SK-N-SH (cell line): ENCODE measurements at regions of chr17 and their contacts with region 1.

Region 1: GRCh38 chr17:38674749-38675615 is at the start of gene EPOP:
- DNase-seq: peak; percentile 99
- H3K4me3 ChIP-seq: peak within 1 kb of the TSS; percentile 71 to 77
- H3K27ac ChIP-seq: peak within 1 kb of the TSS in 1 of 2 experiments; percentile 64; a peak in 2 of 4 replicates
- H3K4me1 ChIP-seq: peaks cover 0 to 19% of the 10 kb centered on the region in 2 experiments; a peak in 1 of 4 replicates
- H3K27me3 ChIP-seq: no peaks in the 10 kb centered on the region
- CTCF ChIP-seq: no peak
- EP300 ChIP-seq: no peak
- RAD21 ChIP-seq: no peak
- polyA plus RNA-seq, gene EPOP: 2.7 and 3.1 TPM in 2 replicates

Region 2: DNA sequence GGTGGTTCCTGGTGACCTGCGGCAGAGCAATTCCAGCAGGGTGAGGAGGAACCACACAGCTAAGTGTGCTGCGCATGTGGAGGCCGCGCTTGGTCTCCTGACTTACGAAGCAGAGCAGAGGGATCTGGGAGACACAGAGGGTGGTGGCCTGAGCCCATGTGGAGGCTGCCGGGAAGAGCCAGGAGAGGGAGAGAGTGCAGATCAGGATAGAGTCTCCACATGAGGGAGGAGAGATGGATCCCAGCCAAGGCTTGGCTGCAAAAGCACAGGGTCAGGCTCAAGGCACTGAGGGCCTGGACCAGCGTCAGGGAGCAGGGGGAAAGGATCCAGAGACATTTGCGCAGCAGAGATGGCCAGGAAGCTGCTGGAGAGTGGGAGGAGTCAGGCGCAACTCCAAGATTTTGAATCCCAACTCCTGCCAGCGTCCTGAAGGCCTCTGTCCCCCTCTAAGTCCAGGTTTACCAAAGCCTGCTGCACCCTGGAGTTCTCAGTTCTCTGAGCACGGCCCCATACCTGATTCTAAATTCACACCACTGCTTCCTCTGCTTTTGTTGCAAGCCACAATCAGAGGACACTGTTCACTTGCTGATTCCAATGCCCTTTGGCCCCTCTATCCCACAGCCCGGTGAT is 18.8 kb after region 1 on chr17:
- CTCF ChIA-PET with region 1: interaction called, 18 read pairs
- POLR2A ChIA-PET with region 1: interaction called, 3 read pairs
- DNase-seq: peak; percentile 78
- H3K4me3 ChIP-seq: no peak overlapping the region
- H3K27ac ChIP-seq: peak overlapping the region; percentile 35 to 91; a peak in 3 of 4 replicates
- H3K4me1 ChIP-seq: peaks cover 9 to 15% of the 10 kb centered on the region in 2 experiments; a peak in 2 of 4 replicates
- H3K27me3 ChIP-seq: no peaks in the 10 kb centered on the region
- CTCF ChIP-seq: no peak
- EP300 ChIP-seq: no peak
- RAD21 ChIP-seq: no peak

Region 3: DNA sequence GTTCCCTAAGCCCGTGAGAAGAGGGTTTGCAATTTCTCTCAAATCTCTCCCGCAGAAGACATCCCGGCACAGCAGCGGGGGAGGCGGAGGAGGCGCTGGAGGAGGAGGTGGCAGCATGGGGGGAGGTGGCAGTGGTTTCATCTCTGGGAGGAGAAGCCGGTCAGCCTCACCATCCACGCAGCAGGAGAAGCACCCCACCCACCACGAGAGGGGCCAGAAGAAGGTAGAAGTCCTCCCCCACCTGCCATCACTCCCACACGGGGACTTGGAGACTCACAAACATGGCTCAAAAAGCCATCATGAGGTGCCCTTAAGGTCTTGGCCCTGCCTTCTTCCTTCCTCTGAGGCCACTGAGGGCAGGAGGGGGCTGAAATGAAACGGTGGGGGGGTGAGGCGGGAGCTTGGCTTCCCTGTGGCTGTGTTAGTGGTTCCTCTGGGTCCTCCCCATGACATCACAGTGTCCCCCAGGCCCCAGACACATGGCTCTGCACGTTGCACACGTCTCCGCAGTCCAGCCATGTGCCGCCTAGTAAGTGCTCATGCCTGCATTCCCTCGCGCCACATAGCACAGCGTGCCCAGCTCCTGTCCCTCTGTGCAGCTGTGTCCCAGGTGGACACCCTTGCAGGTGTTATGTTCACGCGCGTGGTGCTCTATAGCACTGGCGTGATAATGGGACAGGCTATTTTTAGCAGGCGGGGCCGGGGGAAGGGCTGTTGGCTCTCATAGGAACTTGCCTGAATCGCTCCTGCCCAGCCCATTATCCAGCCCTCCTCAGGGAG is 37.0 kb after region 1 on chr17:
- CTCF ChIA-PET with region 1: interaction called, 10 read pairs
- POLR2A ChIA-PET with region 1: no interaction called
- DNase-seq: no peak
- H3K4me3 ChIP-seq: no peak overlapping the region
- H3K27ac ChIP-seq: no peak overlapping the region
- H3K4me1 ChIP-seq: peaks cover 2 to 13% of the 10 kb centered on the region in 2 experiments; a peak in 2 of 4 replicates
- H3K27me3 ChIP-seq: no peaks in the 10 kb centered on the region
- CTCF ChIP-seq: no peak
- EP300 ChIP-seq: no peak
- RAD21 ChIP-seq: no peak

Region 4: GRCh38 chr17:38729886-38730525 is 55.0 kb after region 1 on chr17 and contains the start of gene CISD3:
- CTCF ChIA-PET with region 1: interaction called, 93 read pairs
- POLR2A ChIA-PET with region 1: interaction called, 7 read pairs
- DNase-seq: peak; percentile 95
- H3K4me3 ChIP-seq: peak within 1 kb of the TSS; percentile 78 to 79
- H3K27ac ChIP-seq: peak within 1 kb of the TSS; percentile 73 to 98
- H3K4me1 ChIP-seq: peaks cover 6 to 68% of the 10 kb centered on the region in 2 experiments; a peak in 1 of 4 replicates
- H3K27me3 ChIP-seq: no peaks in the 10 kb centered on the region
- CTCF ChIP-seq: peak; percentile 54
- EP300 ChIP-seq: no peak; a peak in 1 of 4 replicates
- RAD21 ChIP-seq: peak; percentile 40; the same call in 1 of the 2 replicates
- polyA plus RNA-seq, gene CISD3: 12.9 and 16.5 TPM in 2 replicates